ENCODE measurements at regions of chr6 and their contacts with region 1.

Region 1: DNA sequence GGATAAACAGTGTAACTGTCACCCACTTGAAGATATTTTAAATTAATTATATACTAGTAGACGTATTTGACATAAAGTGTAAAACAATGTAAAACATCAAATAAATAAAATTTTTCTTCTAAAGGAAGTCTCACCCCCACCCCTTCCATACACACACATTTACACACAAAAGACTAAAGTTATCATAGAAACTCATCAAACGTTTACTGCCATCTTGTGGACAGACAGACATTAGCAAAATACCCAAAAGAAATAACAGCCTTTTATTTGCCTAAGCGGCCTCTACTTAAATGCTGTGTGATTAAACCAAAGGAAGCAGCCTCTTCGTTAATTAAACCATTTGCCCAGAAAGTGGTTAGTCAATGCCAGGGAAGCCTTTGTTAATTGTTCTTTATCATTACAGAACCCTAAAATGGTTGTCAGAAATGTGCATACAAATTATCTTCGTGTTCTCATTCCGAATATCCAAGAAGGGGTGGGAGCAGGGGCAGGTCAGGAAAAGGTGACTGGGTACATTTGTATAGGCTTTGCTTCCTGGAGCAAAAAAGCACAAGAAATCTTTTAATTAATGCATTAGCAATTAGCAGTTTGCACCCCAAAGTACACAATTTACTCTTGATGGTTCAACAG is 176.2 kb upstream of the SASH1 start:
- DNase-seq: peak in 2 of 9 experiments; percentile 26 to 46
- ATAC-seq: no peak
- H3K4me3 ChIP-seq: no peak overlapping the region
- H3K4me3 Mint-ChIP-seq: no peak overlapping the region
- H3K27ac ChIP-seq: no peak overlapping the region
- H3K27ac Mint-ChIP-seq: no peak overlapping the region
- H3K4me1 ChIP-seq: no peaks in the 10 kb centered on the region
- H3K4me1 Mint-ChIP-seq: no peaks in the 10 kb centered on the region
- H3K27me3 ChIP-seq: no peaks in the 10 kb centered on the region
- H3K27me3 Mint-ChIP-seq: peaks cover 3% of the 10 kb centered on the region
- CTCF ChIP-seq: peak; percentile 51

Region 2: GRCh38 chr6:147506704-147507114 is 659.7 kb before region 1 on chr6:
- CTCF ChIA-PET with region 1: no interaction called
- POLR2A ChIA-PET with region 1: no interaction called
- intact Hi-C with region 1: loop called in 1 of 2 experiments (anchors 10 kb)
- DNase-seq: peak in 1 of 9 experiments; percentile 18
- ATAC-seq: no peak
- H3K4me3 ChIP-seq: no peak overlapping the region
- H3K4me3 Mint-ChIP-seq: peak overlapping the region; percentile 42
- H3K27ac ChIP-seq: no peak overlapping the region
- H3K27ac Mint-ChIP-seq: no peak overlapping the region
- H3K4me1 ChIP-seq: peaks cover 9% of the 10 kb centered on the region
- H3K4me1 Mint-ChIP-seq: peaks cover 22% of the 10 kb centered on the region
- H3K27me3 ChIP-seq: peaks cover 5 to 6% of the 10 kb centered on the region in 2 experiments
- H3K27me3 Mint-ChIP-seq: peaks cover 58% of the 10 kb centered on the region
- CTCF ChIP-seq: no peak

Region 3: GRCh38 chr6:148144917-148145521 is 21.4 kb before region 1 on chr6:
- CTCF ChIA-PET with region 1: interaction called, 3 read pairs
- POLR2A ChIA-PET with region 1: no interaction called
- intact Hi-C with region 1: loop called (anchors 1 kb)
- DNase-seq: peak; percentile 5 to 56 (median 51)
- ATAC-seq: no peak
- H3K4me3 ChIP-seq: no peak overlapping the region
- H3K4me3 Mint-ChIP-seq: no peak overlapping the region
- H3K27ac ChIP-seq: no peak overlapping the region
- H3K27ac Mint-ChIP-seq: no peak overlapping the region
- H3K4me1 ChIP-seq: no peaks in the 10 kb centered on the region
- H3K4me1 Mint-ChIP-seq: peaks cover 7% of the 10 kb centered on the region
- H3K27me3 ChIP-seq: no peaks in the 10 kb centered on the region
- H3K27me3 Mint-ChIP-seq: peaks cover 2% of the 10 kb centered on the region
- CTCF ChIP-seq: peak; percentile 61

Measured in CD8-positive, alpha-beta T cell (primary cell).